ENCODE measurements at regions of chr14 and their contacts with region 1.

Region 1: GRCh38 chr14:105248368-105248756 is at the start of gene BTBD6:
- DNase-seq: peak; percentile 58 to 79
- ATAC-seq: peak; percentile 84 to 86
- H3K4me3 ChIP-seq: peak within 1 kb of the TSS; percentile 55 to 80 (median 62)
- H3K27ac ChIP-seq: peak within 1 kb of the TSS; percentile 81 to 87 (median 84)
- H3K4me1 ChIP-seq: peaks cover 22 to 23% of the 10 kb centered on the region in 2 donors
- H3K27me3 ChIP-seq: no peaks in the 10 kb centered on the region
- CTCF ChIP-seq: no peak
- POLR2A ChIP-seq: peak; percentile 59 to 61
- total RNA-seq, gene BTBD6: 48.4 to 85.9 (median 53.6) TPM

Region 2: DNA sequence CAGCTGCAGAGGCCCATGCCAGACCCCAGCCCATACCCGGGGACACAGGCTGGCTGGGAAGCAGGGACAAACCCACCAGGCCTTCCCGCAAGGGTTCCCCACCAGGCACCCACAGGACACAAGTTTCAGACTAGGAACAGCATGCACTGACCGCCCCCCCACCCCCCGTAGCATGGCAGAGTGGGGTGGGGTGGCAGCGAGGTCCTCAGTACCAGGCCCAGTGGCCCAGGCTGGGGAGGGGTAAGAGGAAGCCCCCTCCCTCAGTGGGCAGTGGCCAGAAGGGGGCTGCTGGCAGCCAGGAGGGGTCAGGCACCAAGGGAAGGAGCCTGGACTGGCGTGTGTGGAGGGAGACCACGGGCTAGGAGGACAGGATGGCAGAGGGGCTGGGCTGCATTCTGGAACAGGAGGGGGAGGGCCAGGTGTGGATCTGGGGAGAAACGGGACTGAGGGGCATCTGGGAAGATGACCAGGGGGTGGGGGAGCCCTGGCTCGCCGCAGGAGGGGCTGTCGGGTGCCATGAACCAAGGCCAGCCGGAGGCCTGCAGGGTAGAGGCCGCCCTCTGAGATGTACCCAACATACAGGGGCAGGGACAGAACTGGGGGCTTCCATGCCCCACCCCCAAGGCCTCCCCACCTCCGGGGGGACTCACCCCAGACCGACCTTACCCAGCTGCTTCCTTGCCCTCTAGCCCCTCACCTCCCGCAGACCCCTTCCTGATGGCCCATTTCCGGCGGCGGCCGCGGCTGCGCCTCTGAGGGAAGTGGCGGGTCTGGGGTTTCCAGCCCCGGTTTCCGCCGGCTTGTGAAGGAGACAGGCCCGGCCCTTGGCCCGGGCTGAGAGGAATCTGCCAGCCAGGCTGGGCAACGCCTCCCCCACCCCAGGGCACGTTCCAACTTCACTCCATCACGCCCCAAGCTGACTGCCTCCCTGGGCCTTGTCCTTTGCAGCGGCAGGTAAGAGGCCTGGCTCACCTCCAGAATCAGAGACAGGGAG is 74.2 kb before region 1 on chr14:
- in situ Hi-C with region 1: no loop called
- intact Hi-C with region 1: loop called (anchors 10 kb)
- DNase-seq: no peak
- ATAC-seq: no peak
- H3K4me3 ChIP-seq: no peak overlapping the region
- H3K27ac ChIP-seq: no peak overlapping the region
- H3K4me1 ChIP-seq: peaks cover 38 to 41% of the 10 kb centered on the region in 2 donors
- H3K27me3 ChIP-seq: no peaks in the 10 kb centered on the region
- CTCF ChIP-seq: no peak
- POLR2A ChIP-seq: no peak